ENCODE measurements at regions of chr18 and their contacts with region 1.

Region 1: DNA sequence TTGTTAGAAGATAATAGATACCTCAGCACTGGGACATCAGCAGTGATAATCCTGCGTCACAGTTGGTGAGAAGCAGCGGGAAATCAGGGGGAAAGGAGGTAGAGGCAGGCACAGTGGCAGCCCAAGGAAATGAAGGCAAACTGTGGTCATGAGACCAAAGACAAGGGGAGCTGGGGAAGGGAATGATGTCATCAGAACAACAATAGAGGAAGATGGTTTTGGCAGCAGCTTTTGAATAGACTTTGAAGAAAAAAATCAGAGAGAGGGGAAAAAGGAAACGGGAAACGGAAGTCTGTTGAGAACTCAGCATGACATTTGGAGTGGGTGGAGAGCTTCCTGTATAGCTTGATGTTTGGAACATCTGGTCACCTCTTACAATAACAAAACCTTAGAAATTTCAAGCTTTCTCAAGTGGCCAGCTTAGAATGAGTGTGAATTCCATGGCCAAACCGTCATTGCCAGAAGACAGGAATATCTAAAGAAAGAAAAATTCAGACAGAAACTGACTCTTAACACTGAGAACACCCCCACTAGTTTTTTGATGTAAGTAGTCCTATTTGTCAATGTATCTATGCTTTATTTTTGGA is 18.4 kb upstream of the YES1 start:
- H3K4me3 ChIP-seq: no peak overlapping the region
- H3K27ac ChIP-seq: no peak overlapping the region
- H3K4me1 ChIP-seq: no peaks in the 10 kb centered on the region; the same call in 1 of the 2 replicates
- CTCF ChIP-seq: no peak

Region 2: DNA sequence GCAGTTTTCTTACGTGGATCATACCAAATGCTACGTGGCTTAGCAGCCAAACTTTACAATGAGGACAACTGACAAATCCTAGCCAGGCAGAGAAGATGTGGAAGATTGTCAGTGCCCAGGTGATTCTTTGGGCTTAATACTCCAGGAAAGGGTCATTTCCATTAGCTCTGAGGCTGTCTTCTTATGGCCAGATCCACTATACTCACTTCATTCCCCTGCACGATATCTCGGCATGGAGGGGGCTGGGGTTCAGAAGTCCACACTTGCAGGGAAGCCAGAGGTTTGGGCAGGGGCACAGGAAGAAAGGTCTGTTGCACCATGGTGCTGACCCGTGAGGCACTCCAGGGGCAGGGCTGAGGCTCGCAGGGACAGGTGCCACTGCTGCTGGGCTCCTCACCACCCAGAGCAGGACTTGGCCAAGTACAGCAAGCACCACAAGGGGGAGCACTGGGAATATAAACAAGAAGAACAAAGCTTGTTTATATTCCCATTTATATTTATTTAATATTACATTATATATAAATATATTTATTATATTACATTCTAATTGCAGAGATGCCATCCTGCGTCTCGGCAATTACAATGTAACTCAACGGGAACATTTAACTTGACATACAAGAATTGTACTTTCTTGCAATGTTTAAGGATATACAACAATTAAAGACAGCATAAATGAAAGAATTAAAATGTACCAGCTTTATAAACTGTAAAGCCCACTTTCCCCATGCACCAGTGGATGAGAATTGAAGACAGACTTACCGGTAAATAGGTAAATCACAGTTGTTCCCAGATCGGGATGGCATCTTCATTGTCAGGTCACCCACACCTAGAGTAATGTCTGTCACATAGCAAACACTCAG is 206.4 kb before region 1 on chr18:
- CTCF ChIA-PET with region 1: interaction called, 184 read pairs
- POLR2A ChIA-PET with region 1: no interaction called
- H3K4me3 ChIP-seq: no peak overlapping the region
- H3K27ac ChIP-seq: no peak overlapping the region
- H3K4me1 ChIP-seq: no peaks in the 10 kb centered on the region
- CTCF ChIP-seq: no peak

Region 3: GRCh38 chr18:712401-713134 is 117.8 kb before region 1 on chr18 and contains the start of gene ENOSF1:
- CTCF ChIA-PET with region 1: interaction called, 17 read pairs
- POLR2A ChIA-PET with region 1: interaction called, 6 read pairs
- H3K4me3 ChIP-seq: peak within 1 kb of the TSS; percentile 48
- H3K27ac ChIP-seq: peak within 1 kb of the TSS; percentile 69
- H3K4me1 ChIP-seq: peaks cover 4% of the 10 kb centered on the region
- CTCF ChIP-seq: peak; percentile 73

Region 4: DNA sequence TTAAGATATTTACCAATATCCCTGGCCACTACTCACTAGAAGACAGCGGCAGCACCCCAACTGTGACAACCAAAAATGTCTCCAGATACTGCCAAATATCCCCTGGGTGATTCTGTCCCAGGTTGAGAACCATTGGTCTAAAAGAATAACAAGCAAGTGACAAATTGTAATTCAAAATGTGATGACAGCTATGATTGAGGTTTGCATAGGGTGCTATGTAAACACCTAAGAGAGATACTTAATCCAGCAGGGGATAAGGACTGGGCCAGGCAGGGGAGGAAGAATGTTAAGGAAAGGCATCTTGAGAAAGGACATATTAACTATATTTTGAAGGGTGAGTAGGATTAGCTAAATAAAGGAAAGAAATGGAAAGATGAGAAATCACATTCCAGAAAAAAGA is 80.0 kb before region 1 on chr18:
- CTCF ChIA-PET with region 1: interaction called, 230 read pairs
- POLR2A ChIA-PET with region 1: no interaction called
- H3K4me3 ChIP-seq: no peak overlapping the region
- H3K27ac ChIP-seq: no peak overlapping the region
- H3K4me1 ChIP-seq: peaks cover 3% of the 10 kb centered on the region; the same call in 1 of the 2 replicates
- CTCF ChIP-seq: no peak

Region 5: DNA sequence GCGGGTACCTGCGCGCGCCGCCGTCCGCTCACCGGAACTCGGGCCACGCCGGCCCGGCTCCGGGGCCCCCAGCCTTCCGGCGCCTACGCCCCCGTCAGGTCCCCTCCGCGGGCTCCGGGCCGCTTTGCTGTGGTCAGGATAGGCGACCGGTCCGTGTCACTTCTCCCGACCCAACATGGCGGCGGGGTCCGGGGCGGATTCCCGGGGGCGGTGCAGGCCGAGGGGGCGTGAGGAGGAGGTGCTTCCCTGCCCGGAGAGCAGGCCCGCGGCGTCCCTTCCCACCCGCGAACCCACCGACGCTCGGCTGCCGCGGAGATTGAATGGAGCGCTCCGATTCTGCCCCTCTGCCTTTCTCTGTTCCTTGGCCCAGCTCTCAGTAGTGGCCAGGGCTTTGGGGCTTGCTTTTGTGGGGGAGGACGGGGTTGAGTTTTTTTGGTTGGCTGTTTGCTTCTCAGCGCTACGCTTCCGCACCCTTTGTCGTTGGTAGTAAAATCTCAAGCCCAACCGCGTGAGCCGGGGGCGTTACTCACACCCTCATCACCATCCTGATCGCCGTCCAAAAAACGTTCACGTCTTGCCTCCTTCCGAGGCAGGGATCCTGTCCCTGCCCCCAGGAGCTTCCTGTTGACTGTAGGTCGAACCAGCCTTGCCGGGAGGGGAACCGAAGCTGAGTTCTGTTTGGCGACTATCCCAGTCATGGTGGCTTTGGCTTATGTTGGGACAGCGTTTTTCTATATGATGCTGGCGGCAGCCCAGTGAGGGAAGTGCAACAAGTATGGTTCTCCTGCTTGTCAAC is 17.8 kb before region 1 on chr18:
- CTCF ChIA-PET with region 1: interaction called, 50 read pairs
- POLR2A ChIA-PET with region 1: interaction called, 4 read pairs
- H3K4me3 ChIP-seq: peak overlapping the region; percentile 91
- H3K27ac ChIP-seq: peak overlapping the region; percentile 81
- H3K4me1 ChIP-seq: peaks cover 17% of the 10 kb centered on the region
- CTCF ChIP-seq: no peak

Measured in HEK293 (cell line).